Panc1 (cell line): ENCODE measurements at regions of chr1 and their contacts with region 1.

Region 1: GRCh38 chr1:77579547-77579946 is 102.9 kb downstream of the ZZZ3 start:
- DNase-seq: no peak
- ATAC-seq: no peak
- H3K4me3 ChIP-seq: no peak overlapping the region
- H3K27ac ChIP-seq: no peak overlapping the region
- H3K4me1 ChIP-seq: no peaks in the 10 kb centered on the region
- H3K27me3 ChIP-seq: no peaks in the 10 kb centered on the region
- CTCF ChIP-seq: no peak

Region 2: DNA sequence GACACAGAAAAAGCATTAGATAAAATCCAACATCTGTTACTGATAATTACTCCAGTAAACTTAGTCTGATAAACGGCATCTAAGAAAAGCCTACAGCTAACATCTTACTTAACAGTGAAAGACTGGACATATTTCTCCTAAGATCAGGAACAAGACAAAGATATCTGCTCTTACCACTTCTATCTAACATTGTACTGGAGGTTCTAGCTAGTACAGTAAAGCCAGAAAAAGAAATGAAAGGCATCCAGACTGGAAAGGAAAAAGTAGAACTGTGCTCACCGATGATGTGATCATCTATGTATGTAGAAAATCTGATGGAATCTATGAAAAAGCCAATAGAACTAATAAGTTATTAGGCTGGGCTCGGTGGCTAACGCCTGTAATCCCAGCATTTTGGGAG is 330.6 kb after region 1 on chr1:
- CTCF ChIA-PET with region 1: no interaction called
- POLR2A ChIA-PET with region 1: no interaction called
- in situ Hi-C with region 1: no loop called
- intact Hi-C with region 1: no loop called
- DNase-seq: no peak
- ATAC-seq: no peak
- H3K4me3 ChIP-seq: no peak overlapping the region
- H3K27ac ChIP-seq: no peak overlapping the region
- H3K4me1 ChIP-seq: no peaks in the 10 kb centered on the region
- H3K27me3 ChIP-seq: no peaks in the 10 kb centered on the region
- CTCF ChIP-seq: no peak

Region 3: DNA sequence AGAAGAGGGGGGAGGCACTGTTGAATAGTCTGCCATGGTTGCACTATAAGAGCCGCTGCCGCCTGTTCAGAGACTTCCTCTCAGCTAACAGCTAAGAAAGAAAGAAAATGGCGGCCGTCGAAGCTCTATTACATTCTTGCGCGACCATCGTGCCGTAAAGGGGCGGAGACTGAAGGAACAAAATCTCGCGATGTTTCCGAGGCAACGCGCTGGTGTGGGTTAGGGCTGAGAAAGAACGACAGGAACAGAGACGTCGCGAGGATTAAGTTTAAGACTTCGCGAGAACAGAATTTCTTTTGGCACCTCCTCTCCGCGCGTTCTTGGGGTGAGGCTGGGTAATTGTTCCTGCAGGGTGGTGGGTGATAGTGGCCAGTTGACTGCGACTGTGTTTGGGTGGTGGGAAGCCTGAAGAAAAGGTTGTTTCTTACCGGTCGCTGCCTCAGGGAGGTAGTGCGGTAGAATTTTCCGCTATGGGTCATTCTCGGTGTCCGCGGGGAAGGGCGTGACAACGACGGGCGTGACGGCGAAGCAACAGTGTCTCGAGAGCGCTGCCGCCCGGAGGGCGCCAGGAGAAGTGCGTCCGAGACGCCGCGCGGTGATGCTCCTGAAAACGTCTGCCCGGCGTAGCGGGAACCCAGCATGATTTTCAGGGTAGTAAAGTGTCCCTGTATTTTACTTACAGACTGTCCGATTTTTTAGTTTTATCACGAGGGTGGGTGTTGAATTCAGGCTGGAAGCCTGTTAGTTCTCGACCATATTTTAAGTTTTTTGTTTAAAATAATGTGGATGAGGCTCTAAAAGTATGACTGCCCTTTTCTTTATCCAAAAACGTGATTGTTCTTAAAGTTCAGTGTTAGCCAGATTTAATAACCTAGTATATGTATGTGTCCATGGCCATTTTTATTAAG is 399.7 kb after region 1 on chr1 and contains the start of gene FUBP1:
- CTCF ChIA-PET with region 1: no interaction called
- POLR2A ChIA-PET with region 1: interaction called, 12 read pairs
- in situ Hi-C with region 1: no loop called
- intact Hi-C with region 1: no loop called
- DNase-seq: peak; percentile 99
- ATAC-seq: peak; percentile 94
- H3K4me3 ChIP-seq: peak within 1 kb of the TSS; percentile 96 to 100
- H3K27ac ChIP-seq: peak within 1 kb of the TSS; percentile 100
- H3K4me1 ChIP-seq: peaks cover 18% of the 10 kb centered on the region
- H3K27me3 ChIP-seq: no peaks in the 10 kb centered on the region
- CTCF ChIP-seq: peak; percentile 87
- total RNA-seq, gene FUBP1: 150 TPM